ENCODE measurements at regions of chr10 and their contacts with region 1.

Region 1: GRCh38 chr10:3107426-3107961 is 40.1 kb downstream of the PFKP start:
- DNase-seq: peak; percentile 92 to 97
- ATAC-seq: peak; percentile 76 to 90
- H3K4me3 ChIP-seq: peak overlapping the region in 3 of 4 donors; percentile 23 to 26 (median 26)
- H3K27ac ChIP-seq: peak overlapping the region; percentile 85 to 92 (median 86)
- H3K4me1 ChIP-seq: peaks cover 58 to 75% of the 10 kb centered on the region in 2 donors
- H3K27me3 ChIP-seq: no peaks in the 10 kb centered on the region
- CTCF ChIP-seq: peak in 1 of 5 experiments; percentile 10
- POLR2A ChIP-seq: peak; percentile 43 to 52

Region 2: DNA sequence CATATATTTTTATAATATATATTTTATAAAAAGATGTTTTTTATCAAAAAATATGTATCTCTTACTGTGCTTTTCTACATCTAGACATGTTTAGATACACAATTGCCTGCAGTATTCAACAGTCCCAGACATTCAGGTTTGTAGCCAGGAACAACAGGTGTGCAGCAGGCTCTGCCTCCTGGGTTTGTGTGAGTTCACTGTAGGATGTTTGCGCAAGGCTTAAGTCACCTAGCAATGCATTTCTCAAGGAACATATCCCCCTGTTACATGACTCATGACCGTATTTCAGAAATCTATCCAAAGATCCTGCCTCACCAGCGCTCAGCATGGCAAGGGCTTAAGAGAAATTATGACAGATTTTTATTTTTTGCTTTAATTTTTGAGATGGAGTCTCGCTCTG is 23.6 kb after region 1 on chr10:
- in situ Hi-C with region 1: no loop called
- intact Hi-C with region 1: loop called (anchors 1 kb)
- DNase-seq: peak; percentile 73 to 85
- ATAC-seq: peak; percentile 90 to 95
- H3K4me3 ChIP-seq: no peak overlapping the region
- H3K27ac ChIP-seq: peak overlapping the region; percentile 74 to 77 (median 76)
- H3K4me1 ChIP-seq: peaks cover 24 to 26% of the 10 kb centered on the region in 2 donors
- H3K27me3 ChIP-seq: no peaks in the 10 kb centered on the region
- CTCF ChIP-seq: no peak
- POLR2A ChIP-seq: no peak

Region 3: GRCh38 chr10:3136763-3137611 is 29.5 kb after region 1 on chr10:
- in situ Hi-C with region 1: no loop called
- intact Hi-C with region 1: loop called (anchors 1 kb)
- DNase-seq: peak; percentile 68 to 94
- ATAC-seq: peak; percentile 90 to 95
- H3K4me3 ChIP-seq: peak overlapping the region; percentile 5 to 26 (median 15)
- H3K27ac ChIP-seq: peak overlapping the region; percentile 81 to 94 (median 87)
- H3K4me1 ChIP-seq: peaks cover 21 to 22% of the 10 kb centered on the region in 2 donors
- H3K27me3 ChIP-seq: no peaks in the 10 kb centered on the region
- CTCF ChIP-seq: no peak
- POLR2A ChIP-seq: peak in 1 of 2 donors; percentile 36

Region 4: GRCh38 chr10:3172446-3173170 is 65.1 kb after region 1 on chr10 and contains the start of gene PITRM1:
- in situ Hi-C with region 1: no loop called
- intact Hi-C with region 1: loop called (anchors 2 kb)
- DNase-seq: peak; percentile 99
- ATAC-seq: peak; percentile 97 to 99
- H3K4me3 ChIP-seq: peak within 1 kb of the TSS; percentile 68 to 90 (median 80)
- H3K27ac ChIP-seq: peak within 1 kb of the TSS; percentile 85 to 95 (median 90)
- H3K4me1 ChIP-seq: peaks cover 6 to 8% of the 10 kb centered on the region in 2 donors
- H3K27me3 ChIP-seq: no peaks in the 10 kb centered on the region
- CTCF ChIP-seq: no peak
- POLR2A ChIP-seq: peak; percentile 99
- total RNA-seq, gene PITRM1: 81.9 to 123 (median 90.2) TPM

Region 5: GRCh38 chr10:3805791-3806461 is 698.4 kb after region 1 on chr10:
- in situ Hi-C with region 1: no loop called
- intact Hi-C with region 1: loop called (anchors 10 kb)
- DNase-seq: peak in 1 of 2 donors; percentile 66
- ATAC-seq: peak in 1 of 2 donors; percentile 7
- H3K4me3 ChIP-seq: peak overlapping the region; percentile 5 to 23 (median 12)
- H3K27ac ChIP-seq: peak overlapping the region; percentile 85 to 96 (median 90)
- H3K4me1 ChIP-seq: peaks cover 72 to 78% of the 10 kb centered on the region in 2 donors
- H3K27me3 ChIP-seq: no peaks in the 10 kb centered on the region
- CTCF ChIP-seq: no peak
- POLR2A ChIP-seq: no peak